Activated CD8-positive, alpha-beta T cell treated with anti-CD3 and anti-CD28 coated beads, Interleukin-2, amount 10 ng/mL, durations not matched to agents 7 days and 5 days (primary cell): ENCODE measurements at regions of chr17 and their contacts with region 1.

Region 1: GRCh38 chr17:39164675-39165143 is 1.3 kb downstream of the ARL5C start:
- DNase-seq: peak; percentile 88
- ATAC-seq: peak; percentile 96
- H3K4me3 Mint-ChIP-seq: peak overlapping the region; percentile 83
- H3K27ac Mint-ChIP-seq: peak overlapping the region; percentile 60
- H3K4me1 Mint-ChIP-seq: peaks cover 40% of the 10 kb centered on the region
- H3K27me3 Mint-ChIP-seq: peaks cover 17% of the 10 kb centered on the region

Region 2: DNA sequence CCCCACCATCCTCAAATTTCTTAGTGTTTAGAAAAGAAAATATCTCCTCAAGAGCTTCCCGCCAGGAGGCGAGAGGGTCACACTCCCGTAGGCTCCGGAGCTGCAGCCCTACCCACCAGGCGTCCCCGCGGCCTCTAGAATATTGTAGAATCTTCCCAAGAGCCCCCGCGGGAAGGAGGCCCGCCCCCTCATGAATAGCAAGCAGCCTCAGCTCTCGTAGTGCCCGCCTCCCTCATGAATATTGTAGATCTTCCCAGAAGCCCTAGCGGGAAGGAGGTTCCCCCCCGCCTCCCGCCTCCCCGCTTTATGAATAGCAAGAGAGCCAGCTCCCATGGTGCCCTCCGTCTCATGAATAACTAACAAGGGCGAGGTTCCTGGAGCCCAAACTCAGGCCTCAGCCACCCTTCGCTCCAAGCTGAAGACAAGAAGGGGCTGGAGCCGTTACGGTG is 197.4 kb before region 1 on chr17 and contains the start of gene FBXO47:
- CTCF ChIA-PET with region 1: interaction called, 12 read pairs
- POLR2A ChIA-PET with region 1: no interaction called
- DNase-seq: peak; percentile 91
- ATAC-seq: peak; percentile 99
- H3K4me3 Mint-ChIP-seq: peak within 1 kb of the TSS; percentile 77
- H3K27ac Mint-ChIP-seq: peak within 1 kb of the TSS; percentile 83
- H3K4me1 Mint-ChIP-seq: peaks cover 28% of the 10 kb centered on the region
- H3K27me3 Mint-ChIP-seq: peaks cover 4% of the 10 kb centered on the region
- total RNA-seq, gene FBXO47: not detected

Region 3: DNA sequence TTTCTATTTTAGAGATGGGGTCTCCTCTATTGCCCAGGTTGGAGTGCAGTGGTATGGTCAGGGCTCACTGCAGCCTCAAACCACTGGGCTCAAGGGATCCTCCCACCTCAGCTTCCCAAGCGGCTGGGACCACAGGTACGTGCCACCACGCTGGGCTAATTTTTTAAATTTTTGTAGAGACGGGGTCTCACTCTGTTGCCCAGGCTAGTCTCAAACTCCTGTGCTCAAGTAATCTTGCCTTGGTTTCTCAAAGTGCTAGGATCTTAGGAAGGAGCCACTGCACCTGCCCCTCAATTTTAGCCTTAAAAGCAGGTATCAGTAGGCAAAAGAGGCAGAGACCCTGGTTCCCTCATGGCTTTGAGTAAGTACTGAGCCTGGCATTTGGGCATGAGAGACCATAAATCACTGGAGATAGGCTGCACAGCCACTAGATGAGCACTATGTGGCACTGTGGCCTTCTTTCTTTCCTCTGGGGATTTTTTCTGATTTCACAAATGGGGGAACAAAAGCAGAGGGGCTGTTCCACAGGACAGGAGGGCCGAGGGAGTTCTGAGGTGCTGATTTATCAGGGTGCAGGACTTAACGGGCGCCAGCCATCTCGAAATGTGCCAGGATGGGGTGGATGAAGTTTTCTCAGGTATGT is 95.5 kb before region 1 on chr17:
- CTCF ChIA-PET with region 1: interaction called, 10 read pairs
- POLR2A ChIA-PET with region 1: no interaction called
- DNase-seq: peak; percentile 59
- ATAC-seq: peak; percentile 79
- H3K4me3 Mint-ChIP-seq: no peak overlapping the region
- H3K27ac Mint-ChIP-seq: no peak overlapping the region
- H3K4me1 Mint-ChIP-seq: peaks cover 18% of the 10 kb centered on the region
- H3K27me3 Mint-ChIP-seq: peaks cover 4% of the 10 kb centered on the region

Region 4: GRCh38 chr17:39108461-39109375 is 56.0 kb before region 1 on chr17:
- CTCF ChIA-PET with region 1: no interaction called
- POLR2A ChIA-PET with region 1: no interaction called
- DNase-seq: no peak
- ATAC-seq: no peak
- H3K4me3 Mint-ChIP-seq: no peak overlapping the region
- H3K27ac Mint-ChIP-seq: no peak overlapping the region
- H3K4me1 Mint-ChIP-seq: no peaks in the 10 kb centered on the region
- H3K27me3 Mint-ChIP-seq: no peaks in the 10 kb centered on the region

Region 5: DNA sequence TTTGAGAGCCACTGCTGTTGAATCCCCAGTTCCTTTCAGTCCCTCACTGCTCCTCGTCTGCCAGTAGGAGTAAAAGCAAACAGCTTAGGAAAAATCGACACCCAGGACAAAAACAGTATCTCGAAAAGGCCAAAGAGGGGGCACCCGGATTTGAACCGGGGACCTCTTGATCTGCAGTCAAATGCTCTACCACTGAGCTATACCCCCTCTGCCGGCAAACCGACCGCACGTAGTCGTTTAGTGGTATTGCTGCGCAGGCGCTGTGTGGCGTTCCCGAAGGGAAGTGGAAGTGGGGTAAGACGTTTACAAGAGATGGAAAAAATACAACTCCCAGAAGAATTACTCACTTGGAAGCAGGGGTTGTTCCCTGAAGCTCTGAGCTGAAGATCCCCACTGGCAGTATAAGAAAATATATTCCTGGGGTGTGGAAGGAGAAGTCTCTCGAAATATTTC is 11.1 kb before region 1 on chr17:
- CTCF ChIA-PET with region 1: interaction called, 144 read pairs
- POLR2A ChIA-PET with region 1: interaction called, 7 read pairs
- DNase-seq: peak; percentile 93
- ATAC-seq: peak; percentile 62
- H3K4me3 Mint-ChIP-seq: peak overlapping the region; percentile 98
- H3K27ac Mint-ChIP-seq: peak overlapping the region; percentile 93
- H3K4me1 Mint-ChIP-seq: peaks cover 35% of the 10 kb centered on the region
- H3K27me3 Mint-ChIP-seq: peaks cover 23% of the 10 kb centered on the region

Region 6: DNA sequence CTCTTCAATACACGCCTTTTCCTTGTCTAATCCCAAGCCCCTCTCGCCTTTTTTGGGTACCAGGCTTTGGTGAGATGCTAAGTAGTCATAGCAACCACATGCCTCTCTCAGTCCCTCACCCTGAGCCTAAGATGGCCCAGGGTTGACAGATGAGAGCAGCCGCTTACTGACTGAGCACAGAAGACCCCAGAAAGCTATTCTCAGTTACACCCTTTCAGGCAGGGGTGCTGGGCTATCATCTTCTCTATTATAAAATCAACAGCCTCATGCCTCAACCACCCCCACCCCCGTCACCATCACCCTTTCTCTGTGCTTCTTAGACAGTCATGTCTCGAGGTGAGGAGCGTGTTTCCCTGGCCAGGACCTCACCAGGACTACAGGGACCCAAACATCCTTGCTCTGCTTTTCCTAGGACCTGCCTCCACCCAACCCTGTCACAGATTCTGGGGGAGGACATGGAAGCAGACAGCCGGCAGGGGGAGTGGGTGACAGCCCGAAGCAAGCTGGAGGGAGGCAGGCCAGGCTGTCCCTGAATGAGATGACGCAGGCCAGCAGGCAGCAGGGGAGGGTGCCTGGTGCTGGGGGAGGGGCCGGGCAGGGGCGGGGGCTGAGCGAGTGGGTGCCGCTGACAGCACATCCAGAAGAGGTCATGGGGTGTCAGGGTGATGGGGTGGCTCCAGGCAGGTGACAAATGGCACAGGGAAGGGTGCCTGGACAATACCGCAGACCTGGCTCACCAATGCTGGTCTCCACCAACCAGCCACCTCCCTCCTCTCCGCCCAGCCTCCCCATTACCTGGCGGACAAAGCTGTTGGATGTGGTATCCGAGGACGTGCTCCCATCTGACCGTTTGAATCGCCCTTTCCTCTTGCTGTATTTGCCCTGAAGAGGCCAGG is 29.6 kb after region 1 on chr17:
- CTCF ChIA-PET with region 1: interaction called, 31 read pairs
- POLR2A ChIA-PET with region 1: interaction called, 4 read pairs
- DNase-seq: no peak
- ATAC-seq: no peak
- H3K4me3 Mint-ChIP-seq: no peak overlapping the region
- H3K27ac Mint-ChIP-seq: peak overlapping the region; percentile 66
- H3K4me1 Mint-ChIP-seq: peaks cover 46% of the 10 kb centered on the region
- H3K27me3 Mint-ChIP-seq: no peaks in the 10 kb centered on the region

Region 7: GRCh38 chr17:39209317-39210092 is 44.8 kb after region 1 on chr17:
- CTCF ChIA-PET with region 1: interaction called, 20 read pairs
- POLR2A ChIA-PET with region 1: no interaction called
- DNase-seq: peak; percentile 80
- ATAC-seq: peak; percentile 61
- H3K4me3 Mint-ChIP-seq: peak overlapping the region; percentile 50
- H3K27ac Mint-ChIP-seq: peak overlapping the region; percentile 61
- H3K4me1 Mint-ChIP-seq: peaks cover 32% of the 10 kb centered on the region
- H3K27me3 Mint-ChIP-seq: peaks cover 8% of the 10 kb centered on the region

Region 8: GRCh38 chr17:39244600-39245570 is 80.2 kb after region 1 on chr17:
- CTCF ChIA-PET with region 1: interaction called, 26 read pairs
- POLR2A ChIA-PET with region 1: no interaction called
- DNase-seq: peak; percentile 91
- ATAC-seq: peak; percentile 93
- H3K4me3 Mint-ChIP-seq: no peak overlapping the region
- H3K27ac Mint-ChIP-seq: peak overlapping the region; percentile 66
- H3K4me1 Mint-ChIP-seq: peaks cover 16% of the 10 kb centered on the region
- H3K27me3 Mint-ChIP-seq: no peaks in the 10 kb centered on the region